ENCODE measurements at regions of chr12 and their contacts with region 1.

Region 1: DNA sequence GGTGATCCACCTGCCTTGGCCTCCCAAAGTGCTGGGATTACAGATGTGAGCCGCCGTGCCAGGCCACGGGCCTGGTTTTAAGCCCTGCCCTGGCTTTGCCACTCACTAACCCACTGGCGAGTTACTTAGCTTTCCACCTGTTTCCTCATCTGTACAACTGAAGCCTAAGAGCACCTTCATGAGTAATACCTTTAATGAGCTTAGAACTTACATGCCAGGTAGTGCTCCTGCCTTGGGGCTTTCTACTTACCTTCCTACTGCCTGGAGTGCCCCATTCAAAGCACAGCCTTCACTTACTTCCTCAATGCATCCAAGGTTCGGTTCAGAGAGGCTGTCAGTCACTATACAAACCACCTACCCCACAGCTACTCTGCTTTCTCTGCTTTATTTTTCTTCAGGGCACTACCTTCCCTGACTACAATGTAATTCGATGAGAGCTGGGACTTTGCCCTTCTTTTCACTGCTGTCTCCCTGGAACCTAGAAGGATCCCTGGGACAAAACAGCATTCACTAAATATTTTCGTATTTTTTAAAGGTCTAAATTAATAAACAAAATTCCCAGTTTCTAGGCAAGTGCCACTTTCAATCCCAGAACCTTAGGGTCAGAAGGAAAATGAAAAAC is 13.8 kb downstream of the ZCCHC8 start:
- DNase-seq: no peak
- H3K4me3 ChIP-seq: no peak overlapping the region
- H3K27ac ChIP-seq: no peak overlapping the region
- H3K4me1 ChIP-seq: no peaks in the 10 kb centered on the region
- H3K27me3 ChIP-seq: no peaks in the 10 kb centered on the region
- CTCF ChIP-seq: no peak

Region 2: DNA sequence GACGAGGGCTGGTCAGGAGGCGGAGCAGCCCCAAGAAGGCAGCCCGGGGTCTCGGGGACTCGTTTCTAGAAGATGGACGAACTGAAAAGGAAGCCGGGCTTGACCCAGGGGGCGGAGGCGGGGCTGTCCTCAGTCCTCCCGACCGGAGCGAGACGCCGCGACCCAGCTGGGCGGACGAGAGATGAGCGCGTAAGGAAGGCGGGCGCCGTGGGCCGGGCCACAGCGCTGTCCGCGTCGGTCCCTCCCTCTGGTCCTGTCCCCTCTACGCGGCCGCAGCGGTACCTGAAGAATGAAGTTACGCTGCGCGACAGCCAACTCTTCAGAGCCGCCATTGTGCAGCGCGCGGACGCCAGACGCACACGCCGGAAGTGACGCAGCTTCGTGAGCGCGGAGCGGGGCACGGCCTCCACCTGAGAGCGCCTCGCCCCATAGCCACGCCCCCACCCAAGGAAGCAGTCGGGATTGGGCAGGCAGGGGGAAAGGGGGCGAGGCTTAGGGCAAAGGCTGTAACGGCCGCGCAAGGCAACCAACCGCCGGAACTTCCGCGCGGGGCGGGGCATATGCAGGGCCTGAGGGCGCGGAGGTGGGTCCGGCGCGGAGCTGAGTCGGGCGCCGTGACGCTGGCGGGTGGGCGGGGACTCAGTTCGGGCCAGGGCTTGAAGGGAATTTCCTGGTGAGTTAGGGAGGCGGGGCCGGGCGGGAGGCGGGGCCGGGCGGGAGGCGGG is 261.1 kb before region 1 on chr12 and contains the start of gene DIABLO:
- CTCF ChIA-PET with region 1: no interaction called
- dilution Hi-C with region 1: no loop called
- in situ Hi-C with region 1: no loop called
- intact Hi-C with region 1: no loop called
- DNase-seq: peak; percentile 100
- H3K4me3 ChIP-seq: peak within 1 kb of the TSS; percentile 67 to 99 (median 97)
- H3K27ac ChIP-seq: peak within 1 kb of the TSS; percentile 95
- H3K4me1 ChIP-seq: peaks cover 21% of the 10 kb centered on the region
- H3K27me3 ChIP-seq: no peaks in the 10 kb centered on the region
- CTCF ChIP-seq: no peak
- total RNA-seq, gene DIABLO: 54.5 to 55.0 TPM

Region 3: GRCh38 chr12:122336015-122336946 is 150.6 kb before region 1 on chr12:
- CTCF ChIA-PET with region 1: interaction called, 11 read pairs
- dilution Hi-C with region 1: no loop called
- in situ Hi-C with region 1: no loop called
- intact Hi-C with region 1: no loop called
- DNase-seq: no peak
- H3K4me3 ChIP-seq: no peak overlapping the region
- H3K27ac ChIP-seq: no peak overlapping the region
- H3K4me1 ChIP-seq: no peaks in the 10 kb centered on the region
- H3K27me3 ChIP-seq: no peaks in the 10 kb centered on the region
- CTCF ChIP-seq: peak; percentile 81 to 88